Activated naive CD4-positive, alpha-beta T cell treated with anti-CD3 and anti-CD28 coated beads for 36 hours (primary cell): ENCODE measurements at regions of chr19 and their contacts with region 1.

Region 1: DNA sequence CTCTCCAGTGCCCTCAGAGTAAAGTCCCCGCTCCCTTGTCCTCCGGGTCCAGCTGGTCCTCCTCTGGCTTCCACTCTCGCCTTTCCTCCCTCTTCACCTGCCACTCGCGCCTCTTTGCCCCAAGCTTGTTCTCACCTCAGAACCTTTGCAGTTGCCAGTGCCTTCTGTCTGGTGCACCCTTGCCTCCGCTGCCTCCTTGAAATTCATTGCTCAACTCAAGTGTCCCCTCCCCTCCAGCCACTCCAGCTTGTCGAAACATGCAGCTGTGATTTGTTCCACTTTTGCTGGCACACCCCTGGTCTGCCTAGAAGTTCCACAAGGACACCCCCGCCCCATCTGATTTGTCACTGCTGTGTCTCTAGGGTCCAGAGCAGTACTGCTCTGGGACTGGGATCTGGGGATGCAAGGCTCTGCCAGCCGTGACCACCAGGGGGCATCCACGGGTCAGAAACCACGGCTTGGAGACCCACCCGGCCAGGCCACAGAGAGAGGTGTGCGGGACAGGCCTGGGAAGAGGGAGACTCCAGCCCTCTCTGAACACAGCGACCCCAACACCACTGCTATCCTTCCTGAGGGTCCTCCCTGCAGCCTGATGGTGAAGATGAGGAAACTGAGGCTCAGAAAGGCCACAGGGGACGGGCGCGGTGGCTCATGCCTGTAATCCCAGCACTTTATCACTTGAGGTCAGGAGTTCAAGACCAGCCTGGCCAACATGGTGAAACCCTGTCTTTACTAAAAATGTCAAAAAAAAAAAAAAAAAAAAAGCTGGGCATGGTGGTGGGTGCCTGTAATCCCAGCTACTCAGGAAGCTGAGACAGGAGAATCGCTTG is 49.9 kb downstream of the AP1M1 start:
- DNase-seq: peak; percentile 89
- H3K4me3 Mint-ChIP-seq: no peak overlapping the region
- H3K27ac Mint-ChIP-seq: no peak overlapping the region
- H3K4me1 Mint-ChIP-seq: peaks cover 17% of the 10 kb centered on the region
- H3K27me3 Mint-ChIP-seq: no peaks in the 10 kb centered on the region

Region 2: GRCh38 chr19:16235811-16236652 is 11.5 kb before region 1 on chr19:
- CTCF ChIA-PET with region 1: interaction called, 16 read pairs
- intact Hi-C with region 1: no loop called
- DNase-seq: no peak
- H3K4me3 Mint-ChIP-seq: no peak overlapping the region
- H3K27ac Mint-ChIP-seq: peak overlapping the region; percentile 10
- H3K4me1 Mint-ChIP-seq: peaks cover 34% of the 10 kb centered on the region
- H3K27me3 Mint-ChIP-seq: no peaks in the 10 kb centered on the region

Region 3: DNA sequence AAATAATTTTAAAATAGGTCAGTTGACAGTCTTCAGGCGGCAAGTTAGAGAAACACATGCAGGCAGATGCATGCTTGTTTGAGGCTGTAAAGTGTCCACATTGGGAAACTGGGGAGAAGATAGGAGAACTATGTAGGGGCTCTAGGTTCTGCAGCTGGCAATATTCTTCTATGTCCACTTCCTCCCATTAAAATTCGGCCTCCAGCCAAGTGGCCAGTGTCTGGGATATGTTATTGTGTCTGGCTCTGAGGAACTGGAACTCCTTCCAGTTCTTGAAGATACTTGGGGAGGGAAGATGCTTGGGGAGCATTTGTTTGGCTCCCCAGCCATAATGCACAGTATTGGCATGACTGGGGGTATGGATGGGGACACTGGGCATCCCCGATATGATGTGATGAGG is 56.2 kb after region 1 on chr19:
- CTCF ChIA-PET with region 1: interaction called, 10 read pairs
- intact Hi-C with region 1: no loop called
- DNase-seq: no peak
- H3K4me3 Mint-ChIP-seq: no peak overlapping the region
- H3K27ac Mint-ChIP-seq: no peak overlapping the region
- H3K4me1 Mint-ChIP-seq: no peaks in the 10 kb centered on the region
- H3K27me3 Mint-ChIP-seq: no peaks in the 10 kb centered on the region

Region 4: GRCh38 chr19:16338470-16339360 is 91.1 kb after region 1 on chr19:
- CTCF ChIA-PET with region 1: interaction called, 16 read pairs
- intact Hi-C with region 1: no loop called
- DNase-seq: peak; percentile 89
- H3K4me3 Mint-ChIP-seq: peak overlapping the region; percentile 63
- H3K27ac Mint-ChIP-seq: peak overlapping the region; percentile 30
- H3K4me1 Mint-ChIP-seq: peaks cover 61% of the 10 kb centered on the region
- H3K27me3 Mint-ChIP-seq: peaks cover 3% of the 10 kb centered on the region

Region 5: GRCh38 chr19:16376649-16377048 is 129.1 kb after region 1 on chr19:
- CTCF ChIA-PET with region 1: interaction called, 137 read pairs
- intact Hi-C with region 1: no loop called
- DNase-seq: no peak
- H3K4me3 Mint-ChIP-seq: no peak overlapping the region
- H3K27ac Mint-ChIP-seq: no peak overlapping the region
- H3K4me1 Mint-ChIP-seq: peaks cover 64% of the 10 kb centered on the region
- H3K27me3 Mint-ChIP-seq: no peaks in the 10 kb centered on the region

Region 6: DNA sequence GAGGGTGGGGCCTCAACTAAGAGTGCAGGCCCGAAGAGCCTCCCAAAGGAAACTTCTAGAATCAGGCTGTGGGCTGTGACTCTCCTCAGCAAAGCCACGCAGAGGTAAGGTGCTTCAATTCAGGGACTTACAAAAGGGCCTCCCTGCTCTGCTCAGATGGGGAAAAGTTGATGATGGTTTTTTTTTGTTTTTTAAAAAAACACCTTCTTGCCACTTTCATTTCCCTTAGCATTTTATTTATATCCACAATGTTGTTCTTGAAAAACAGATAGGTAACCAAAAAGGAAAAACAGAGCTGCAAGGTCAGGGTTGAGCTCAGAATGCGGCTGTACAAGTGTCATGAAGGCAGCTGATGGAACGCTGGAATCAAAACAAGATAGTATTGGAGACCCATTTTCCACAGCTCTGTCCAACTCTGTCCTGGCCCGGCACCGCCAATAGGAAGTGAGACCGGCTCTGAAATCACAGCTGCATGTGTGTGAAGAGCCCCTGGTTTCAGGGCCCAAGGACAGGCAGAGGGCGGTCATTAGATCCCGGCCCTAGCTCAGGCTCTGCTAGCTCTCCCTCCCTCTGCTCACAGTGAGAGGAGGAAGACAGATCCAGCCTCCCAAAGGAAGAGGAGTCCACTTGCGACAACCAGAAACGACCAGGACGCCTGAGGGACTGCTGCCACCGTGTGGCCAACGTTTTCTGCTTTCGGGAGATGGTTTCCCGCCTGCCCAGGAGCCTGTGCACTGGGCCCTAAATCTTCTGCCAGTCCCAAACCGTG is 135.4 kb after region 1 on chr19:
- CTCF ChIA-PET with region 1: interaction called, 137 read pairs
- intact Hi-C with region 1: loop called (anchors 1 kb)
- DNase-seq: peak; percentile 89
- H3K4me3 Mint-ChIP-seq: no peak overlapping the region
- H3K27ac Mint-ChIP-seq: no peak overlapping the region
- H3K4me1 Mint-ChIP-seq: peaks cover 45% of the 10 kb centered on the region
- H3K27me3 Mint-ChIP-seq: no peaks in the 10 kb centered on the region

Region 7: GRCh38 chr19:16417660-16418596 is 170.4 kb after region 1 on chr19:
- CTCF ChIA-PET with region 1: interaction called, 32 read pairs
- intact Hi-C with region 1: no loop called
- DNase-seq: peak; percentile 69
- H3K4me3 Mint-ChIP-seq: no peak overlapping the region
- H3K27ac Mint-ChIP-seq: no peak overlapping the region
- H3K4me1 Mint-ChIP-seq: peaks cover 8% of the 10 kb centered on the region
- H3K27me3 Mint-ChIP-seq: no peaks in the 10 kb centered on the region